ENCODE measurements at regions of chr5 and their contacts with region 1.

Region 1: GRCh38 chr5:159106569-159107282 is 7.0 kb upstream of the EBF1 start:
- DNase-seq: peak; percentile 73 to 79 (median 76)
- ATAC-seq: peak; percentile 96
- H3K4me3 ChIP-seq: no peak overlapping the region
- H3K27ac ChIP-seq: no peak overlapping the region
- H3K4me1 ChIP-seq: peaks cover 0 to 9% of the 10 kb centered on the region in 2 experiments; a peak in 1 of 5 replicates
- H3K27me3 ChIP-seq: peaks cover 20 to 26% of the 10 kb centered on the region in 2 experiments
- CTCF ChIP-seq: peak; percentile 82 to 88 (median 87)
- EP300 ChIP-seq: no peak
- POLR2A ChIP-seq: no peak
- RAD21 ChIP-seq: peak; percentile 86 to 91

Region 2: DNA sequence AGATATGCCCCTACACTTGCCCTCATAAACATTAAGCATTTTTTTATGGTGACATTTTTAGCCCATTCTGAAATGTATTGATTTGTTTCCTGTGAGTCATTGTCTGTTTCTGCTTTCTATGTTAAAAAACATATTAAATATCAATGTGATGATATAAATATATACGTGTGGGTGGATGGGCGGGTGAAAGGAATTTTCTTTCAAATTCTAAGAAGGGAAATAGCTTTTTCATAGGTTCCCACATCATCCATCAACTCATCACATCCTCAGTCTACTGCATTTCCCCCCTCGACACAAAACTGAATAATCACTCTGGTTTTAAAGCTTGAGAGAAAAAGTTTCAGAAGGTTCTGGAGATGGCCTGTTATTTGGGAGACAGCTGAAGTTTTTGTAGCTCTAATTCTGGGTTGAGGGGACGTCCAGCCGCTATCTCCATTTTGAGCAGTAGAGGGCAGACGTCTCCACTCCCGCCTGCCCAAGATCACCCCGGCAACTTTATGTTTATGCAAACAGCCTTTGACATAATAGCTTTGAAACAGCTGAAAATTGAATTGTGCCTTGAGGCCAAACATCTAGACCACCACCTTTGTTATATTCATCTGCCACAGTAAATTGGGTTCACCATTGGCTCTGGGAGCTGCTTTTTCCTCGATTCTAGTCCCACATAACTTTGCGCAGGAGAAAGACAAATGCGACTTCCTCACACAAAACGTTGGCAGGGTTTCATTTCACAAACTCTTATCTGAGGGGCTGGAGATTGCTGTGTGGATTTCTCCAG is 1031.5 kb before region 1 on chr5:
- CTCF ChIA-PET with region 1: interaction called, 3 read pairs
- POLR2A ChIA-PET with region 1: no interaction called
- in situ Hi-C with region 1: no loop called
- intact Hi-C with region 1: loop called (anchors 2 kb)
- DNase-seq: peak; percentile 53 to 60 (median 55)
- ATAC-seq: peak; percentile 97
- H3K4me3 ChIP-seq: no peak overlapping the region
- H3K27ac ChIP-seq: no peak overlapping the region
- H3K4me1 ChIP-seq: no peaks in the 10 kb centered on the region
- H3K27me3 ChIP-seq: peaks cover 3 to 5% of the 10 kb centered on the region in 2 experiments; a peak in 2 of 5 replicates
- CTCF ChIP-seq: peak; percentile 68 to 85 (median 77)
- EP300 ChIP-seq: no peak
- POLR2A ChIP-seq: no peak
- RAD21 ChIP-seq: peak; percentile 59 to 60

Region 3: GRCh38 chr5:158695595-158696330 is 411.0 kb before region 1 on chr5:
- CTCF ChIA-PET with region 1: interaction called, 31 read pairs
- POLR2A ChIA-PET with region 1: interaction called, 7 read pairs
- in situ Hi-C with region 1: loop called (anchors 5 kb)
- intact Hi-C with region 1: loop called (anchors 1 kb)
- DNase-seq: peak; percentile 70 to 77 (median 74)
- ATAC-seq: peak; percentile 93
- H3K4me3 ChIP-seq: no peak overlapping the region
- H3K27ac ChIP-seq: no peak overlapping the region
- H3K4me1 ChIP-seq: no peaks in the 10 kb centered on the region
- H3K27me3 ChIP-seq: no peaks in the 10 kb centered on the region; a peak in 1 of 5 replicates
- CTCF ChIP-seq: peak; percentile 80 to 90 (median 85)
- EP300 ChIP-seq: no peak
- POLR2A ChIP-seq: no peak
- RAD21 ChIP-seq: peak; percentile 88 to 89

Region 4: DNA sequence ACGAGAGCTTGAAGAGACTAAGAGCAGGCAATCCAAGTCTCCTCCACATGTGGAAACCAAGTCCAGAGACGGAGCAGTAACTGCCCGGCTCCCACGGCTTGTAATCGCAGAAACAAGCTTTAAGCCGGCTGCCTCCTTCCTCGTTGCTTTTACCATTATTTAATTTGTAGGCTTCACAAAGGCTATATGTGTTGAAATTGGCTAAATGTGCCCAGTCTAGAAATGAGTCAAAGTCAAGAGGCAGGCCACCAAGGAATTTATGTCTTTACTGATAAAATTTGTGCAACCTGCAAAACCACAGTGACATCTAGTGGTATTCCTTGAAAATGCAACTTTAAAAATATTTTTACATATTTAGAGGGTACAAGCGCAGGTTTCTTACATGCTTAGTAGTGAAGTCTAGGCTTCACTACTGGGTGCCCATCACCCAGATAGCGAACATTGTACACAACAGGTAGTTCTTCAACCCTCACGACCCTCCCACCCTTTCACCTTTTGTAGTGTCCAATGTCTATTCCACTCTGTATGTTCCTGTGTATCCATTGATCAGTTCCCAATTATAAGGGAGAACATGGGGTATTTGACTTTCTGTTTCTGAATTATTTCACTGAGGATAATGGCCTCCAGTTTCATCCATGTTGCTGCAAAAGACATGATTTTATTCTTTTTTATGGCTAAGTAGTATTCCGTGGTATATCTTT is 26.5 kb after region 1 on chr5:
- CTCF ChIA-PET with region 1: interaction called, 4 read pairs
- POLR2A ChIA-PET with region 1: interaction called, 3 read pairs
- in situ Hi-C with region 1: no loop called
- intact Hi-C with region 1: loop called (anchors 2 kb)
- DNase-seq: peak; percentile 18 to 65 (median 38)
- ATAC-seq: peak; percentile 72
- H3K4me3 ChIP-seq: no peak overlapping the region
- H3K27ac ChIP-seq: no peak overlapping the region
- H3K4me1 ChIP-seq: peaks cover 0 to 3% of the 10 kb centered on the region in 2 experiments; a peak in 2 of 5 replicates
- H3K27me3 ChIP-seq: peaks cover 0 to 8% of the 10 kb centered on the region in 2 experiments; a peak in 4 of 5 replicates
- CTCF ChIP-seq: peak; percentile 59 to 94 (median 68); a peak in 5 of 6 replicates
- EP300 ChIP-seq: no peak
- POLR2A ChIP-seq: no peak
- RAD21 ChIP-seq: peak; percentile 90 to 94